Activated T-helper 1 cell treated with anti-CD3 and anti-CD28 coated beads, Interleukin-12 subunit alpha, Interleukin-12 subunit beta, Interleukin-2, Interleukin-4 antibody, amounts not matched to agents 30 ng/mL and 10 ng/mL and 1 ng/mL, durations not matched to agents 14 hours and 24 hours and 36 hours (primary cell): ENCODE measurements at regions of chr9 and their contacts with region 1.

Region 1: GRCh38 chr9:19102631-19103345 is at the start of gene HAUS6:
- DNase-seq: peak; percentile 92
- H3K4me3 Mint-ChIP-seq: peak within 1 kb of the TSS; percentile 94
- H3K27ac Mint-ChIP-seq: peak within 1 kb of the TSS; percentile 96
- H3K4me1 Mint-ChIP-seq: peaks cover 16% of the 10 kb centered on the region
- H3K27me3 Mint-ChIP-seq: no peaks in the 10 kb centered on the region
- total RNA-seq, gene HAUS6: 31.8 and 31.9 TPM in 2 replicates

Region 2: DNA sequence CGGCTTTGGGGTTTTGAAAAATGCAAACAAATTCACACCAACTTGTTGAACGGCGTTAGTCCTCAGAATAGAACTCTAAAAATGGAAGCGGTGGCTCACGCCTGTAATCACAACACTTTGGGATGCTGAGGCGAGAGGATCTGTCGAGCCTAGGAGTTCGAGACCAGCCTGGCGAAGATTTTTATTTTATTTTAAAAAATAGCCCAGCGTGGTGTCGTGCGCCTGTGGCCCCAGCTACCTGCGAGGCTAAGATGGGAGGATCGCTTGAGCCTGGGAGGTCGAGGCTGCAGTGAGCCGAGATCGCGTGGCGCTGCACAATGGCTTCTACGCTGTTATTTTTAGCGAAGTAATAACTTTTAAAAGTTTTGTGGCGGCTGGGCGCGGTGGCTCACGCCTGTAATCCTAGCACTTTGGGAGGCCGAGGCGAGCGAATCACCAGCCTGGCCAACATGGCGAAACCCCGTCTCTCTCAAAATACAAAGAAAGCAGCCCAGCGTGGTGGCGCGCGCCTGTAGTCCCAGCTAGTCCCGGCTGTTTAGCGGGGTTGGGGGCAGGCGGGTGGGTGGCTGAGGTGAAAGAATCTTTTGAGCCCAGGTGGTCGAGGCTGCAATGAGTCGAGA is 25.2 kb after region 1 on chr9:
- intact Hi-C with region 1: loop called (anchors 1 kb)
- DNase-seq: peak; percentile 18
- H3K4me3 Mint-ChIP-seq: peak overlapping the region; percentile 92
- H3K27ac Mint-ChIP-seq: peak overlapping the region; percentile 89
- H3K4me1 Mint-ChIP-seq: peaks cover 53% of the 10 kb centered on the region
- H3K27me3 Mint-ChIP-seq: no peaks in the 10 kb centered on the region

Region 3: DNA sequence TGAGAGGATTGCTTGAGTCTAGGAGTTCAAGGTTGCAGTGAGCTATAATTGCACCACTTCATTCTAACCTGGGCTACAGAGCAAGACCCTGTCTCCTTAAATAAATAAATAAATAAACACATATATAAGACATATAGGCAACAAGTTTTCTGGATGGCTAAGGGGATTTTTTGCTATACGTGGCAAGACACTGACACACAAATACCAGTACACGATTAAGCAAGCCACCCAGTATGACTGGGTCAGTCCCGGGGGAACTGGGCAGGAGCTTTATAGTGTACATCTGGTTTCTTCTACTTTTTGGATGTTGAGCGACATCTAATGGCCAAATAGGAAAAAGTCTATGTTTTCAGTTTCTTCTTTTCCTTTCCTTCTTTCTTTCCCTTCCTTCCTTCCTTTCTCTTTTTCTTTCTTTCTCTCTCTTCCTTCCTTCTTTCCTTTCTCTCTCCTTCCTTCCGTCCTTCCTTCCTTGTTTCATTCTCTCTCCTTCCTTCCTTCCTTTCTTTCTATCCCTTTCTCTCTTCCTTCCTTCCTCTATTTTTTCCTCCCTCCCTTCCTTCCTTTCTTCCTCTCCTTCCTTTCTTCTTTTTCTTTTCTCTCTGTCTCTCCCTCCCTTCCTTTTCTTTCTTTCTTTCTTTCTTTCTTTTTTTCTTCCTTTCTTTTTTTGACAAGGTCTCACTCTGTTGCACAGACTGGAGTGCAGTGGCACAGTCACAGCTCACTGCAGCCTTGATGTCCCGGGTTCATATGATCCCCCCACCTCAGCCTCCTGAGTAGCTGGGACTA is 71.5 kb after region 1 on chr9:
- intact Hi-C with region 1: loop called (anchors 1 kb)
- DNase-seq: peak; percentile 32
- H3K4me3 Mint-ChIP-seq: no peak overlapping the region
- H3K27ac Mint-ChIP-seq: peak overlapping the region; percentile 15
- H3K4me1 Mint-ChIP-seq: peaks cover 22% of the 10 kb centered on the region
- H3K27me3 Mint-ChIP-seq: peaks cover 2% of the 10 kb centered on the region

Region 4: DNA sequence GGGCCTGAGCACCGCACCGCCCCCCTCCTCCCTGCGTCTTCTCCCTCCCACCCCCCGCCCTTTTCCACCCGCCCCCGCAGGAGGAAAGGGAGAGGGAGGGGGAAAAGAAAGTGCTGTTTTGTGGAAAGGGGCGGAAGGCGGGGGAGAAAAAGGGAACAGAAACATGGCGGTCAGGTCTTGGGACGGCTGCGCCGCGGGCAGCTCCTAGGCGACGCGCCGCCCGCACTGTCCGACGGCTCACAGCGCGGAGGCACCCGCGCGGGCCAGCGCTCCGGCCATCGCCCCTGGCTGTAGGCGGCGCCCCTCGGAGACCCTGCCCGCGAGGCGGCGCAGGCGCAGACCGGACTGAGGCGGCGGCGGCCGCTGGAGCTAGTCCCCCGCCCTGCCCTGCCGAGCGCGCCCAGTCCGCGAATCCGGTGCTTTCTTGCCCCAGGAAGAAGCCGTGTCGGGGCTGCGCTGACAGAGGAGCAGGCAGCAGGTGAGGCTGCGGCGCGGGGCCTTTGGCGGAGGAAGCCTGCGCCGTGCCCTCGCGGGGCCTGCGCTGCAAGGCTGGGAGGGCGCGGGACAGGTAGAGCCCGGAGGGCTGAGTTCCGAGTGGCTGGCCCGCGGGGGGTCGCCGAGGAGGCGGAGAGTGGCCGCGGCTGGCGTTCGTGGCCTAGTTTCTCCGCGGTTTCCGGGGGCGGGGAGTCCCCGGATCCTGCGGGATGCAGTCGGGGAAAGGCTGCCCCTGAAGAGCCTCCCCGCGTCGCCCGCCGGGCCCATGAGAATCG is 127.8 kb after region 1 on chr9 and contains the start of gene DENND4C:
- intact Hi-C with region 1: loop called (anchors 2 kb)
- DNase-seq: peak; percentile 83
- H3K4me3 Mint-ChIP-seq: peak within 1 kb of the TSS; percentile 77
- H3K27ac Mint-ChIP-seq: peak within 1 kb of the TSS; percentile 73
- H3K4me1 Mint-ChIP-seq: peaks cover 8% of the 10 kb centered on the region
- H3K27me3 Mint-ChIP-seq: no peaks in the 10 kb centered on the region
- total RNA-seq, gene DENND4C: 18.4 and 21.1 TPM in 2 replicates

Region 5: GRCh38 chr9:19408693-19409400 is 306.1 kb after region 1 on chr9 and contains the start of gene ACER2:
- intact Hi-C with region 1: loop called (anchors 1 kb)
- DNase-seq: peak; percentile 95
- H3K4me3 Mint-ChIP-seq: peak within 1 kb of the TSS; percentile 97
- H3K27ac Mint-ChIP-seq: peak within 1 kb of the TSS; percentile 27
- H3K4me1 Mint-ChIP-seq: peaks cover 18% of the 10 kb centered on the region
- H3K27me3 Mint-ChIP-seq: peaks cover 10% of the 10 kb centered on the region
- total RNA-seq, gene ACER2: 1.3 and 1.4 TPM in 2 replicates